Upper lobe of right lung (tissue), 1 donor: ENCODE measurements at regions of chr17 and their contacts with region 1.

Region 1: DNA sequence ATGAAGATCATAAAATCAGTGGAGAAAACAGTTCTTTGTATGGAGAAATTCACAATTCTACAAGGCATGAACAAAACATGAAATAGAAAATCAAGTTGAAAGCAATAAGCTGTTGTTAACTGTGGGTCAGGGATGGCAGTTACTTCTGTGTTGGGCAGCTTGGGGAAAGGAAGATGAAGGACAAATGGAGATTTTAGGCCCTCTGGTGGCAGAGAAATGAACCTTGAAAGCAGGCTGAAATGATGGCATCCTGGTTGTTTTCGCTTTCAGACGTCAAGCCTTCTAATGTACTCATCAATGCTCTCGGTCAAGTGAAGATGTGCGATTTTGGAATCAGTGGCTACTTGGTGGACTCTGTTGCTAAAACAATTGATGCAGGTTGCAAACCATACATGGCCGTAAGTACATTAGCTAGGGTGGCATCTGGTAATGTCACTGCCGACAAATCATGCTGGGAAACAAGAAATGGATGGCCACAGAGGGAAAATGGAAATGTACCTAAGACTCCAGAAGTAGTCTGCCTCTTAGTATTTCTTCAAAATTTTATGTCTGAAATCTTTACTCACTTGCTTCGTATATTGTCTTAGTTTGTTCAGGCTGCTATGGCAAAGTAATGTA is 108.9 kb downstream of the MAP2K6 start:
- DNase-seq: no peak
- ATAC-seq: peak; percentile 54
- H3K4me3 ChIP-seq: no peak overlapping the region
- H3K27ac ChIP-seq: no peak overlapping the region
- H3K4me1 ChIP-seq: no peaks in the 10 kb centered on the region
- H3K27me3 ChIP-seq: no peaks in the 10 kb centered on the region
- CTCF ChIP-seq: peak; percentile 62

Region 2: DNA sequence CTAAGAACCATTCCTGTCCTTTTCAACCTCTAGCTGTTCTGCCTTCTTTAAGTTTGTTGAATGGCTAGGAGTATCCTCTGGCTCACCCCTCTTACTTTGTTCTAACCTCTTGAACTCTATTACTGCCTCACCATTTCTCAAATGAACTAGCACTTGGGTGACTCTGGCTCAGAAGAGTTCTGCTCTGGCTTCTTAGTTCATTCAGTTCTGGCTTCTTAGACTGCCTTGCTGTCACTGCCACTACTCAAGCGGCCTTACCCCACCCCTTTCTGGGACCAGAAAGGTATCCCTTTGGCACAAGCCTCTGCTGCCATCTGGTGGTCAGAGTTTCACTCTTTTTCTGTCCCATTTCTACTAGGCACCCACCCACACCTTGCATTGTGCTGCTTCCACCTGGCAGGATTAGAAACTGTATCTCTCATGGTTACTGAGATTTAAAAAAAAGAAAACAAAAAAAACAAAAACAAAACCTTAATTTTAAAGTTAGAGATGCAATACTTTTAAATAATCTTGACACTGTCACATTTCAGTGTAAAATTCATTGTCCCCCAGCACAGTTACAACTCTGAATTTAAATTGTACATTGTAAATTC is 287.9 kb before region 1 on chr17:
- intact Hi-C with region 1: no loop called
- DNase-seq: peak; percentile 67
- ATAC-seq: peak; percentile 97
- H3K4me3 ChIP-seq: no peak overlapping the region
- H3K27ac ChIP-seq: no peak overlapping the region
- H3K4me1 ChIP-seq: no peaks in the 10 kb centered on the region
- H3K27me3 ChIP-seq: no peaks in the 10 kb centered on the region
- CTCF ChIP-seq: peak; percentile 70

Region 3: GRCh38 chr17:69335058-69335457 is 188.3 kb before region 1 on chr17:
- intact Hi-C with region 1: loop called (anchors 10 kb)
- DNase-seq: no peak
- ATAC-seq: peak; percentile 32
- H3K4me3 ChIP-seq: no peak overlapping the region
- H3K27ac ChIP-seq: no peak overlapping the region
- H3K4me1 ChIP-seq: no peaks in the 10 kb centered on the region
- H3K27me3 ChIP-seq: no peaks in the 10 kb centered on the region
- CTCF ChIP-seq: peak; percentile 45